Brain microvascular endothelial cell (primary cell): ENCODE measurements at regions of chr15 and their contacts with region 1.

Region 1: DNA sequence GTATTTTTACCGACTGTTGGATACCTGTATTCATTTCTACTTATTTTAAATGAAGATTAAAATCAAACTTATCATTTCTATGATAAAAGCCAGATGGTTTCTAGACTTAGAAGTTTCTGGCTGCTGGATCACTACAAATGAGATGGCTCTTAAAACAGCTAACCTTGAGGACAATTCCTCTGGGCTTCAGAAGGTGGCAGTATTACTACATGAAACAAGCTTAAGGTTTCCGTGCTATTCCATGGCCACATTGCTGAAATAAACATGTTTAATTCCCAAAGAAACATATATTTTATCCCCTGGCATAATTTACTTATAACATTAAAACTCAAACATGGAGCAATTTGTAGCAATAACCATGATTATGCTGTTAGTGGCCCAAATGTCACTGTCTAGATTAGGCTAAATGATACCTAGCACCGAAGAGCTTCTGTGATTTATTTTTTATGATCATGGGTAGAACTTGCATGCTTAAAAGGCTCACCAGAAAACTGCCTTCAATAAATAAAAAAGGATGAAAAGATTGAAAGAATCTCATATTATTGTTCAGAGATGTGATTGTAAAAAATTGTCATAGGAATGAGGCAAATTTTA is 204.0 kb upstream of the NANOGP8 start:
- DNase-seq: peak; percentile 54
- H3K4me3 ChIP-seq: no peak overlapping the region
- H3K27ac ChIP-seq: no peak overlapping the region
- H3K27me3 ChIP-seq: no peaks in the 10 kb centered on the region
- CTCF ChIP-seq: peak; percentile 77

Region 2: DNA sequence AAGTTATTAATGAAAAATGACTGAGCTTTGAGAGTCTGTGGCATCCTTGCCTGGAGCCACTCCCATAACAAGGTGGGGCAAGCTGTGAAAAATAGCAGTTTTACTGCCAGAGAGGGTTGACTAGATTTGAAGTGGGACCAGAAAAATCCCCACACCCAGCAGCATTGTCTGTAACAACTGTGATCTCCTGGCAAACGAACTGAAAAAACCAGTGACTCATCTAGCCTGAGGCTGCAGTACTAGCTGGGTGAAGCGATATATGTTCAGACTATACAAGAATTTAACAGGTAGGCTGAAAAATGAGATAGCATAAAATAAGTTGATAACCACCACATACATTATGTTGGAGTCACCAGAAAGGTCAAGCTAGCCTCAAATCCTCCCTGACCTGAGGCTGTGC is 192.9 kb after region 1 on chr15:
- in situ Hi-C with region 1: loop called (anchors 25 kb)
- DNase-seq: peak; percentile 67
- H3K4me3 ChIP-seq: no peak overlapping the region
- H3K27ac ChIP-seq: no peak overlapping the region
- H3K27me3 ChIP-seq: no peaks in the 10 kb centered on the region
- CTCF ChIP-seq: no peak

Region 3: GRCh38 chr15:35603301-35603700 is 314.2 kb after region 1 on chr15:
- in situ Hi-C with region 1: no loop called
- DNase-seq: peak; percentile 27
- H3K4me3 ChIP-seq: no peak overlapping the region
- H3K27ac ChIP-seq: no peak overlapping the region
- H3K27me3 ChIP-seq: no peaks in the 10 kb centered on the region
- CTCF ChIP-seq: no peak